ENCODE measurements at regions of chr14 and their contacts with region 1.

Region 1: GRCh38 chr14:21014761-21015190 is 10.1 kb downstream of the NDRG2 start:
- DNase-seq: peak; percentile 83
- ATAC-seq: peak; percentile 90
- H3K4me3 ChIP-seq: no peak overlapping the region
- H3K27ac ChIP-seq: no peak overlapping the region
- H3K4me1 ChIP-seq: no peaks in the 10 kb centered on the region
- H3K27me3 ChIP-seq: peaks cover 23% of the 10 kb centered on the region
- CTCF ChIP-seq: peak; percentile 96
- POLR2A ChIP-seq: no peak
- RAD21 ChIP-seq: peak; percentile 96

Region 2: GRCh38 chr14:21032326-21033132 is 17.8 kb after region 1 on chr14:
- CTCF ChIA-PET with region 1: interaction called, 11 read pairs
- POLR2A ChIA-PET with region 1: no interaction called
- dilution Hi-C with region 1: no loop called
- in situ Hi-C with region 1: no loop called
- intact Hi-C with region 1: no loop called
- DNase-seq: no peak
- ATAC-seq: no peak
- H3K4me3 ChIP-seq: no peak overlapping the region
- H3K27ac ChIP-seq: no peak overlapping the region
- H3K4me1 ChIP-seq: no peaks in the 10 kb centered on the region
- H3K27me3 ChIP-seq: peaks cover 61% of the 10 kb centered on the region
- CTCF ChIP-seq: no peak
- POLR2A ChIP-seq: no peak
- RAD21 ChIP-seq: no peak

Region 3: GRCh38 chr14:21047378-21047781 is 32.6 kb after region 1 on chr14:
- CTCF ChIA-PET with region 1: interaction called, 14 read pairs
- POLR2A ChIA-PET with region 1: no interaction called
- dilution Hi-C with region 1: no loop called
- in situ Hi-C with region 1: no loop called
- intact Hi-C with region 1: no loop called
- DNase-seq: no peak
- ATAC-seq: peak; percentile 35; the same call in 1 of the 2 replicates
- H3K4me3 ChIP-seq: no peak overlapping the region
- H3K27ac ChIP-seq: no peak overlapping the region
- H3K4me1 ChIP-seq: peaks cover 4% of the 10 kb centered on the region; the same call in 1 of the 2 replicates
- H3K27me3 ChIP-seq: peaks cover 25% of the 10 kb centered on the region
- CTCF ChIP-seq: no peak
- POLR2A ChIP-seq: no peak
- RAD21 ChIP-seq: no peak

Region 4: DNA sequence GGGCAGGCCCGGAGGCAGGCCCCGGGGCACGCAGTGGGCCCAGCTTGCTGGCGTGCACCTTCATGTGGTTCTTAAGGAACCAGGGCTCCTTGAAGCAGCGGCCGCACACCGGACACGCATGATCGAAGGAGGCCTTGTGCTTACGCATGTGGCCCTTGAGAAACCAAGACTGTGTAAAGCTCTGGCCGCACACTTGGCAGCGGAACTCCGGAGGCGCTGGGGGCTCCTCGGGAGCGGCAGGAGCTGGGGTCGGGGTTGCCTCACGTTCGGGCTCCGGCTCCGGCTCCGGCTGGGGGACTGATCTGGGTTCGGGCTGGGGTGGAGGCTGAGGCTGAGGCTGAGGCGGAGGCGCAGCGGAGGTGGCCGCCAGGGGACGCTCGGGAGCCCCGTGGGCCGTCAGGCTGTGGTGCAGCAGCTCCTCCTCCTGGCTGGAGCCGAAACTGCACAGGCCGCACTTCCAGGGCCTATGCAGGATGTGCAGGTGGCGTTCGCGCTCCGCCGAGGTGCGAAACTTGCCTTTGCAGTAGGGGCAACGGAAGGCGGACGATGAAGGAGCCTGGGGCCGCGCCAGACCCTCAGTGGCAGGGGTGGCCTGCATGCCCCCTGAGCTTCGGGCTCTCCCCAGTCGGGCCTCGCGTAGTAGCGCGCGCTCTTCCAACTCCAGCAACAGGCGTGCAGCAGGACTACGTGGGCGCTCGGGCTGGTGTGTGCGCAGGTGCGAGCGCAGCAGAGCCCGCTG is 77.7 kb after region 1 on chr14:
- CTCF ChIA-PET with region 1: interaction called, 17 read pairs
- POLR2A ChIA-PET with region 1: no interaction called
- dilution Hi-C with region 1: no loop called
- in situ Hi-C with region 1: no loop called
- intact Hi-C with region 1: loop called (anchors 1 kb)
- DNase-seq: peak; percentile 67
- ATAC-seq: peak; percentile 85
- H3K4me3 ChIP-seq: no peak overlapping the region
- H3K27ac ChIP-seq: no peak overlapping the region
- H3K4me1 ChIP-seq: peaks cover 5% of the 10 kb centered on the region
- H3K27me3 ChIP-seq: no peaks in the 10 kb centered on the region
- CTCF ChIP-seq: peak; percentile 100; the same call in 1 of the 2 replicates
- POLR2A ChIP-seq: peak; percentile 65; the same call in 1 of the 2 replicates
- RAD21 ChIP-seq: peak; percentile 100

Region 5: DNA sequence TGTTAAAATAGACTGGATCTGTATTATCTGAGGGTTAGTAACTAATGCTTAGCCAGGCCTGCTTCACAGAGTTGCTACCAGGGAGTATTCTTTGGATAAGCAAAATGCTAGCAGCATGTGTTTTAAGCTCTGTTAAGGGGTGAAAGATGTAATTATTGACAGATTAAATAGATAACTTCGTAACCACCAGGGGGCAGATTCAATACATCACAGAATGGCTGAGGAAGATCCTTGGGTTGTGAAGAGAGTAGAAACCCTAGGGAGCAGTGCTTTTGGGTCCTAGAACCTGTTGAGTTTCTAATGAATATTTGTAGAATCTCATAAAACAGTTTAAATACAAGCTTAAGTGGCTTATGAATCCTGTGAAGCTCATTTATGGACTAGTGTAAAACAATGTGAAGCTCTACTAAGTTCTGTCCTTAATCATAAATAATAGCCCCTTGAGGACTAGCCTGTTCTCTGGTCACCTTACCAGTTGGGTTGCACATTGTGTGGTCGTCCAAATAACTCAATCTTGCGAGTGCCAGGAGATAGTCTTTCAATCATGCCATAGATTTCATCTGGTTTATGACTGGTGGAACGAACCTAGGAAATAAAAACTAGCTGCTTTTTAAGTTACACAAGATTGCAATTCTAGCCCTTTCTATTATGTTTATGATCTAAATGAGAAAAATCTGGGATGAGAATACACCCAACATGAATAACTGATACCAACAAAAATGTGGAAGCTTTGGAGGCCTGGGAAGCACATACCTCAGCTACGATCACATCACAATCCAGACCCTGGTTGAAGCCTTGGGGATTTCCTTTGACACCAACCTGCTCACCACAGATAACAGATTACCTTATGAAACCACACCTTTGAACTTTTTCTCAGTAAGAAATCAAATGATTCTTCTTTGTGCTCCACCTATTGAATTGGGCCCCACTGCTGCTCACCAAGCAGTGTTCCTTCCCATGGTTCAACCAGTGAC is 484.1 kb after region 1 on chr14:
- CTCF ChIA-PET with region 1: no interaction called
- POLR2A ChIA-PET with region 1: no interaction called
- dilution Hi-C with region 1: no loop called
- in situ Hi-C with region 1: no loop called
- intact Hi-C with region 1: no loop called
- DNase-seq: peak; percentile 73
- ATAC-seq: peak; percentile 41; the same call in 1 of the 2 replicates
- H3K4me3 ChIP-seq: no peak overlapping the region
- H3K27ac ChIP-seq: peak overlapping the region; percentile 33; the same call in 1 of the 2 replicates
- H3K4me1 ChIP-seq: peaks cover 6% of the 10 kb centered on the region
- H3K27me3 ChIP-seq: no peaks in the 10 kb centered on the region
- CTCF ChIP-seq: peak; percentile 49
- POLR2A ChIP-seq: no peak
- RAD21 ChIP-seq: peak; percentile 46